CD14-positive monocyte (primary cell): ENCODE measurements at regions of chr18 and their contacts with region 1.

Region 1: GRCh38 chr18:32092422-32093101 is 888 bp downstream of the RNF138 start:
- DNase-seq: peak; percentile 93 to 98 (median 95)
- H3K4me3 ChIP-seq: peak overlapping the region; percentile 88 to 96 (median 91)
- H3K4me3 Mint-ChIP-seq: peak overlapping the region; percentile 98 to 99
- H3K27ac ChIP-seq: peak overlapping the region; percentile 96 to 100
- H3K27ac Mint-ChIP-seq: peak overlapping the region; percentile 97 to 99 (median 99)
- H3K4me1 ChIP-seq: peaks cover 39 to 59% of the 10 kb centered on the region in 2 donors
- H3K4me1 Mint-ChIP-seq: peaks cover 42% of the 10 kb centered on the region
- H3K27me3 ChIP-seq: no peaks in the 10 kb centered on the region
- H3K27me3 Mint-ChIP-seq: peaks cover 0 to under 1% (median 0%) of the 10 kb centered on the region in 3 donors
- CTCF ChIP-seq: no peak

Region 2: GRCh38 chr18:31942999-31943865 is 149.3 kb before region 1 on chr18 and contains the start of gene TRAPPC8:
- intact Hi-C with region 1: loop called (anchors 1 to 5 kb)
- DNase-seq: peak; percentile 97 to 99 (median 98)
- H3K4me3 ChIP-seq: peak within 1 kb of the TSS; percentile 84 to 92 (median 85)
- H3K4me3 Mint-ChIP-seq: peak within 1 kb of the TSS; percentile 99 to 100
- H3K27ac ChIP-seq: peak within 1 kb of the TSS; percentile 90 to 92
- H3K27ac Mint-ChIP-seq: peak within 1 kb of the TSS; percentile 99 to 100 (median 100)
- H3K4me1 ChIP-seq: peaks cover 23 to 29% of the 10 kb centered on the region in 2 donors
- H3K4me1 Mint-ChIP-seq: peaks cover 30% of the 10 kb centered on the region
- H3K27me3 ChIP-seq: no peaks in the 10 kb centered on the region
- H3K27me3 Mint-ChIP-seq: no peaks in the 10 kb centered on the region
- CTCF ChIP-seq: no peak
- polyA plus RNA-seq, gene TRAPPC8: 16.2 to 52.7 (median 22.1) TPM